ENCODE measurements at regions of chr3 and their contacts with region 1.

Region 1: DNA sequence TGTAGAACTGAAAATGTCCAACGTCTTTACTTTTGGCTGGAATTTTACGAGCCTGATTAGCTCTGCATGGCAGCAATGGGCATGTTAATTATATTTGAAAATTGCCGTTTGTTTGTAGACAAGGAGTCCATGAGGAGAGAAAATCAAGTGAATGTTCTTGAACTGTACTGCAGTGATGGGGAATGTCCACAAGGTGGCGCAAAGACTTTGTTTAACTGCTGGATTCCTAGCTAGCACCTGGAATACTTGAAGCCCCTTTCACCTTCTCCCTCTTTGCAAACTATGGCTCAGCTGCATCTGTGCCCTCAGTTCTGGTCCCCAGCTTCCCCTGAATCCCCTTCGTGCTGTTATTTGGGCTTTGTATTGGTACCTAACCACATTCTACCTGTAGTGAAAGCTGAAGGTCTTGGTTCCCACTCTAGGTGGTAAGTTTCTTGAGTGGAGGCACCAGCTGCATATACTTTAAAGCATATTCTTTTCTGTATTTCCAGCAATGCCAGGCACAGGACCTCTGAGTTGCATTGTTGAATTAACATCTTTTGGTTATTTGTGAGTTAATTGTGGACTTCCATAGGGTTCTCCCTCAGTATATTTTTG is 25.3 kb downstream of the EXOG start:
- DNase-seq: peak; percentile 78
- H3K4me3 Mint-ChIP-seq: no peak overlapping the region
- H3K27ac Mint-ChIP-seq: no peak overlapping the region
- H3K4me1 Mint-ChIP-seq: peaks cover 39% of the 10 kb centered on the region
- H3K27me3 Mint-ChIP-seq: no peaks in the 10 kb centered on the region

Region 2: GRCh38 chr3:37863939-37864822 is 657.3 kb before region 1 on chr3:
- CTCF ChIA-PET with region 1: no interaction called
- DNase-seq: no peak
- H3K4me3 Mint-ChIP-seq: no peak overlapping the region
- H3K27ac Mint-ChIP-seq: no peak overlapping the region
- H3K4me1 Mint-ChIP-seq: peaks cover 19% of the 10 kb centered on the region
- H3K27me3 Mint-ChIP-seq: peaks cover 44% of the 10 kb centered on the region

Region 3: DNA sequence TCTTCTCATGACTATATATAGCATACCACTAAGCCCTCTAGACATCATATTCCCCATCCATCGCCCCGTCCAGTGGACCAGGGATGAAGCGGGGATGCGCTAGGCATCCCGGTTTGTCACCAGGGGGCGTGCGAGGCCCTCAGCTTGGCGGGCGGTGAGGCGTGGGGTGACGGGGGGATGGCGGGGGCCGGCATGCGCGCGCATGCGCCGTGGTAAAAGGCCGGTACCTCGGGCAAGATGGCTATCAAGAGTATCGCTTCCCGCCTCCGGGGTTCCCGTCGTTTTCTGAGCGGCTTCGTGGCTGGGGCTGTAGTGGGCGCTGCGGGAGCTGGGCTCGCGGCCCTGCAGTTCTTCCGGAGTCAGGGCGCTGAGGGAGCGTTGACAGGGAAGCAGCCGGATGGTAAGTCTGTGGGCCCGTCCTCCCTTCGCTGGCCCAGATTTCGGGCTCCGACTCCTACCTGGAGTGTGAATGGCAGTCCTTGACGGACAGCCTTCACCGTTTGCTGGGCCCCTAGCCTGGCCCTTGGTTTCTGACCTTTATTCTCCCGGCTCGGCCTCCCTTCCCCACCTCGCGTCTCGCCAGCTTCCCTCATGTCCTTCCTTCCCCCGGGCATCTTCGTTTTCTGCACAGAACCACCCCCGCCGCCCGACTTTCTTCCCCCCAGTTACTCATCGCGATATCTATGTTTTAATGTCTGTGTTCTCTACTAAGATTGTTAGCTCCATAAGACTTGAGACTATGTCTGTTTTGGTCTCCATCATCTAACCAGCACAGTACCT is 25.2 kb before region 1 on chr3 and contains the start of gene EXOG:
- CTCF ChIA-PET with region 1: interaction called, 13 read pairs
- DNase-seq: peak; percentile 96
- H3K4me3 Mint-ChIP-seq: peak within 1 kb of the TSS; percentile 94
- H3K27ac Mint-ChIP-seq: peak within 1 kb of the TSS; percentile 81
- H3K4me1 Mint-ChIP-seq: peaks cover 27% of the 10 kb centered on the region
- H3K27me3 Mint-ChIP-seq: no peaks in the 10 kb centered on the region

Region 4: GRCh38 chr3:38507120-38507519 is 14.4 kb before region 1 on chr3:
- CTCF ChIA-PET with region 1: interaction called, 19 read pairs
- DNase-seq: no peak
- H3K4me3 Mint-ChIP-seq: no peak overlapping the region
- H3K27ac Mint-ChIP-seq: no peak overlapping the region
- H3K4me1 Mint-ChIP-seq: no peaks in the 10 kb centered on the region
- H3K27me3 Mint-ChIP-seq: no peaks in the 10 kb centered on the region

Region 5: GRCh38 chr3:38651154-38651789 is 129.8 kb after region 1 on chr3:
- CTCF ChIA-PET with region 1: interaction called, 68 read pairs
- DNase-seq: peak; percentile 77
- H3K4me3 Mint-ChIP-seq: no peak overlapping the region
- H3K27ac Mint-ChIP-seq: no peak overlapping the region
- H3K4me1 Mint-ChIP-seq: peaks cover 5% of the 10 kb centered on the region
- H3K27me3 Mint-ChIP-seq: peaks cover 23% of the 10 kb centered on the region

Region 6: GRCh38 chr3:38662544-38662943 is 141.1 kb after region 1 on chr3:
- CTCF ChIA-PET with region 1: interaction called, 18 read pairs
- DNase-seq: peak; percentile 30
- H3K4me3 Mint-ChIP-seq: no peak overlapping the region
- H3K27ac Mint-ChIP-seq: no peak overlapping the region
- H3K4me1 Mint-ChIP-seq: no peaks in the 10 kb centered on the region
- H3K27me3 Mint-ChIP-seq: peaks cover 33% of the 10 kb centered on the region